ENCODE measurements at regions of chr6 and their contacts with region 1.

Region 1: DNA sequence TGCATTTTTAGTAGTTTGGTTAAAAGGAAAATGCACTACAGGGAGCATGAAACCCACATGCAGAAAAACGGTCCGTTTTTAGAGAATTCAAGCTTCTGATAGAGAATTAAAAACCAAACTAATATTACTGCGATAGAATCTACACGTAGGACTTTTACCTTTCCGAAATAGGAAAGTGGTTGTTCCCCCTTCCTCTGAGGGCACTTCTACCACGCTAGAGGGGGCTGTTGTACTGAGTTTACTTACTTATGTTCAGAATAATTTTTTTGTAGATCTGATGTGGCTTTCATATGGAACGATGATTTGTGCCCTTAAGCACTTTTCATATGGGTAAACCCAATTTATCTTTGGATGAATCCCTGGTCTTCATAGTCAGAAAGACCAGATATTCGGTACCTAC is 264.3 kb upstream of the PLN start:
- DNase-seq: peak; percentile 36 to 41
- ATAC-seq: peak; percentile 75 to 84
- H3K4me3 ChIP-seq: peak overlapping the region in 2 of 4 donors; percentile 9 to 31
- H3K27ac ChIP-seq: peak overlapping the region in 1 of 4 donors; percentile 12
- H3K4me1 ChIP-seq: peaks cover 7 to 19% of the 10 kb centered on the region in 2 donors
- H3K27me3 ChIP-seq: no peaks in the 10 kb centered on the region
- CTCF ChIP-seq: peak; percentile 71 to 82 (median 76)
- POLR2A ChIP-seq: no peak

Region 2: GRCh38 chr6:118542184-118542952 is 258.6 kb after region 1 on chr6:
- in situ Hi-C with region 1: loop called in 1 of 4 experiments (anchors 25 kb)
- intact Hi-C with region 1: no loop called
- DNase-seq: no peak
- ATAC-seq: no peak
- H3K4me3 ChIP-seq: no peak overlapping the region
- H3K27ac ChIP-seq: peak overlapping the region in 1 of 4 donors; percentile 88
- H3K4me1 ChIP-seq: peaks cover 22 to 49% of the 10 kb centered on the region in 2 donors
- H3K27me3 ChIP-seq: no peaks in the 10 kb centered on the region
- CTCF ChIP-seq: no peak
- POLR2A ChIP-seq: no peak

Region 3: GRCh38 chr6:118580585-118581419 is 297.0 kb after region 1 on chr6:
- in situ Hi-C with region 1: loop called in 2 of 4 experiments (anchors 10 to 25 kb)
- intact Hi-C with region 1: loop called (anchors 1 kb)
- DNase-seq: peak; percentile 71 to 86
- ATAC-seq: peak; percentile 86 to 92
- H3K4me3 ChIP-seq: peak overlapping the region; percentile 8 to 29 (median 24)
- H3K27ac ChIP-seq: peak overlapping the region; percentile 81 to 85 (median 84)
- H3K4me1 ChIP-seq: peaks cover 42 to 46% of the 10 kb centered on the region in 2 donors
- H3K27me3 ChIP-seq: no peaks in the 10 kb centered on the region
- CTCF ChIP-seq: peak; percentile 72 to 84 (median 80)
- POLR2A ChIP-seq: no peak

Region 4: DNA sequence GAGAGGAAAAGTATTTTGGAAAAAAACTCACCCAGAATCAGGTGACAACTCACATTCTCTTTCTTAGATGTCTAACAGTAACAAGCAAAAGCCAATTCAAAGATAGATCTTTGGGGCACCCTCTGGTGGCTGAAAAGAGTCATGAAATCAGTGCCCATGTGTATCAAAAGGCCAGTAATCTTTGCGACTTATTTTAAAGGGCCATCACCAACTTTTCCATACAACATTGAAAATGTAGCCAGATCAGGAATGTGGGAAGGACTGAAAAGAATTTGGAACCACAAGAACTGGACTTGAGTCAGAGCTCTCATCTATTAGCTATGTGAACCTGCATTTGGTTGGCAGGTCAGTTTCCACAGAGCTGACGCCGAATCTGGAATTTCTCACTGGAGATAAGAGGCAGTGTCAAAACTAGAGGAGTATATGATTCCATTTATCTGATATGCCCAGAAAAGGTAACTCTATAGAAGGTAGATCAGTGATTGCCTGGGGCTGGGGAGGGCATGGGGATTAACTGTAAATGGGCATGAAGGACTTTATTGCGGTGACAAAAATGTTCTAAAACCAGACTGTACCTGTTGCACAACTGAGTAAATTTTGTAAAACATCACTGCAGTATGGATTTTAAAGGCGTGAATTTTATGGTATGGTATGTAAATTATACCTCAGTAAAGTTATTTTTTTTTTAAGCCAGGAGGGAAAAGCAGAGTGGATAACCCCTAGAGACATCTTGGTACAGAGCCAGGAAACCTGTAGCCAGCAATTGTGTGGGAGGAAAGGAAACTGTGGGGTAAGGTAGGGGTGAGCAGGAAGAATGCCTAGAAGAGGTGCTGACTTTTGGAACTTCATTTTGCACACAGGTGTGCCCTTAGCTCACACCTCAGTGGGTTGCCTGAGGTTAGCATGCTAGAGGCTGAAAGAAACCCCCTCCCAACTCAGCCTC is 493.1 kb after region 1 on chr6:
- in situ Hi-C with region 1: loop called (anchors 10 to 25 kb)
- intact Hi-C with region 1: loop called (anchors 1 kb)
- DNase-seq: peak; percentile 32 to 69
- ATAC-seq: peak; percentile 85 to 90
- H3K4me3 ChIP-seq: peak overlapping the region; percentile 14 to 37 (median 31)
- H3K27ac ChIP-seq: no peak overlapping the region
- H3K4me1 ChIP-seq: peaks cover 7 to 8% of the 10 kb centered on the region in 2 donors
- H3K27me3 ChIP-seq: no peaks in the 10 kb centered on the region
- CTCF ChIP-seq: peak; percentile 65 to 84 (median 73)
- POLR2A ChIP-seq: no peak

Region 5: GRCh38 chr6:118893807-118894424 is 610.1 kb after region 1 on chr6 and contains the start of gene ASF1A:
- in situ Hi-C with region 1: no loop called
- intact Hi-C with region 1: loop called (anchors 10 kb)
- DNase-seq: peak; percentile 93 to 96
- ATAC-seq: peak; percentile 87 to 89
- H3K4me3 ChIP-seq: peak within 1 kb of the TSS; percentile 69 to 95 (median 78)
- H3K27ac ChIP-seq: peak within 1 kb of the TSS; percentile 89 to 97 (median 92)
- H3K4me1 ChIP-seq: peaks cover 16 to 31% of the 10 kb centered on the region in 2 donors
- H3K27me3 ChIP-seq: no peaks in the 10 kb centered on the region
- CTCF ChIP-seq: peak in 4 of 5 experiments; percentile 38 to 61 (median 53)
- POLR2A ChIP-seq: peak; percentile 77 to 78
- total RNA-seq, gene ASF1A: 9.7 to 13.9 (median 11.0) TPM